Naive thymus-derived CD4-positive, alpha-beta T cell (primary cell): ENCODE measurements at regions of chr3 and their contacts with region 1.

Region 1: DNA sequence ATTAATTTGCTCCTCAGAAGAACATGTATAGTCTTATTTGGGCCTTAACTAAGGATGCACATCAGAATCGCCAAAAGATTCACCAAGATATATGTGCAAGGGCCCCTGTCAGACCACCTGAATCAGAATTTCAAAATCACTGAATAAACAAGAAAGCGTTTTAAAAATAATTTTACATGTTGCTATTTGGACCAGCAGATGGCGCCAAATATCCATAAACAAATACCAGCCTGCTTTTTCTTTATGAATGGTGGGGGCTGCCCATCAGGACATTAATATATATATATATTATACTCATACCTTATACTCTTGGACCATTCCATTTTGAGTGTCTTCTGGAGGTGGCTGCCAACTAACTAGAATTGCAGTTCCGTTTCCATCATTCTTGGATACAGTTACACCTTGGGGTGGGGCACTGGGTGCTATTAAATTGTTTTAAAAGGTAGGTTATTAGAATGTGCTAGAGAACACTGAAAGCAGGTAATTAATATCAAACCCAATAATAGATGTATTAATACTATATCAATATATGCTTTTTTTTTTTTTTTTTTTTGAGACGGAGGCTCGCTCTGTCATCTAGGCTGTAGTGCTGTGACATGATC is 1108.3 kb downstream of the ROBO1 start:
- DNase-seq: peak in 1 of 9 donors; percentile 2
- ATAC-seq: no peak
- H3K4me3 ChIP-seq: no peak overlapping the region
- H3K4me3 Mint-ChIP-seq: no peak overlapping the region
- H3K27ac ChIP-seq: no peak overlapping the region
- H3K27ac Mint-ChIP-seq: no peak overlapping the region
- H3K4me1 ChIP-seq: no peaks in the 10 kb centered on the region
- H3K4me1 Mint-ChIP-seq: no peaks in the 10 kb centered on the region
- H3K27me3 ChIP-seq: no peaks in the 10 kb centered on the region
- H3K27me3 Mint-ChIP-seq: no peaks in the 10 kb centered on the region

Region 2: DNA sequence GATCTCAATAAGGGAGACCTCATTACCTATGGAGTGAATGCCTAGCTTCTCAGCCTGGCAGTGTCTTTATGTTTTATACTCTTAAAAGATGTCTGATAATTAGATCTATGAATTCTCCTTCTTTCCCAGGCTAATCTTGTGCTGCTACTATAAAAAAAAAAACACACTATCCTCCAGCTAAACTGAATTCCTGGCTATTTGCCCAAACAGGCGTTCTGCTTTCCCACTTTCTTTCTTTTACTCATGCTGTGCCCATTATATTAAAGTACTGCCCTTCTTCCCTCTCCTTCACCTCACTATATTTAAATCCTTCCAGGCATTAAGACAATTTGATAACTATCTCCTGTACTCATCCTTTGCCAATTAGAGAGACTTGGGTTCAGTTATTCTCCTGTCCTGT is 484.7 kb before region 1 on chr3:
- CTCF ChIA-PET with region 1: no interaction called
- POLR2A ChIA-PET with region 1: no interaction called
- intact Hi-C with region 1: no loop called
- DNase-seq: no peak
- ATAC-seq: no peak
- H3K4me3 ChIP-seq: no peak overlapping the region
- H3K4me3 Mint-ChIP-seq: no peak overlapping the region
- H3K27ac ChIP-seq: no peak overlapping the region
- H3K27ac Mint-ChIP-seq: no peak overlapping the region
- H3K4me1 ChIP-seq: no peaks in the 10 kb centered on the region
- H3K4me1 Mint-ChIP-seq: no peaks in the 10 kb centered on the region
- H3K27me3 ChIP-seq: no peaks in the 10 kb centered on the region
- H3K27me3 Mint-ChIP-seq: no peaks in the 10 kb centered on the region

Region 3: GRCh38 chr3:78846718-78847117 is 187.2 kb after region 1 on chr3:
- CTCF ChIA-PET with region 1: no interaction called
- POLR2A ChIA-PET with region 1: no interaction called
- intact Hi-C with region 1: no loop called
- DNase-seq: no peak
- ATAC-seq: no peak
- H3K4me3 ChIP-seq: no peak overlapping the region
- H3K4me3 Mint-ChIP-seq: no peak overlapping the region
- H3K27ac ChIP-seq: no peak overlapping the region
- H3K27ac Mint-ChIP-seq: peak overlapping the region in 1 of 9 donors; percentile 53
- H3K4me1 ChIP-seq: no peaks in the 10 kb centered on the region
- H3K4me1 Mint-ChIP-seq: no peaks in the 10 kb centered on the region
- H3K27me3 ChIP-seq: no peaks in the 10 kb centered on the region
- H3K27me3 Mint-ChIP-seq: no peaks in the 10 kb centered on the region

Region 4: DNA sequence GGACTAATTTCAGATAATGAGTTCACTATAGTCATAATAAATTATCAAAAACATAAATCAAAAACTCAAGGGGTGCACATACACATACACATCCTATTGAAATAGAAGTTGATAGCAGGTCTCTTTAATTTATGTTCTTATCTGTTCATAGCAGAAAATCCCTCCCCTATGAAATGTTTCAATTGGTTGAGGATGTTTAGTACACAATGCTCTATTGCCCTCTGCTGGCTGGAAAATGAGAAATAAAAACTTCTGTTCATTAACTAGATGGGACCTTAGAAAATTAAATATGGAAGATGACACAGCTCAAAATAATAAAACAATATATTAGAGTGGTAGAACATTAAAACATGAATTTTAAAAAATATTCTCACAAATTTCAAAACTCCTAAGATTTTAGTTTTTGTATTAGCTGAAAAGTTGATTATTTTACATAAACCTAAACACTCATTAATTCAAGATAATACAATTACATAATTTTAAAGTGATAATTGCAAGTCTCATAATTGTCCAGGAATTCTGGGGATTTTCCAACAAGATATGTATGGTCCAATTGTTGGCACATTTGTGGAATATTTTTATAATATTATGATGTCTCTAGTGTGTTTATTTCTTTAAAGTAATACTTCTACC is 373.3 kb after region 1 on chr3:
- CTCF ChIA-PET with region 1: interaction called, 3 read pairs
- POLR2A ChIA-PET with region 1: no interaction called
- intact Hi-C with region 1: loop called in 1 of 2 experiments (anchors 1 kb)
- DNase-seq: no peak
- ATAC-seq: no peak
- H3K4me3 ChIP-seq: no peak overlapping the region
- H3K4me3 Mint-ChIP-seq: no peak overlapping the region
- H3K27ac ChIP-seq: no peak overlapping the region
- H3K27ac Mint-ChIP-seq: no peak overlapping the region
- H3K4me1 ChIP-seq: no peaks in the 10 kb centered on the region
- H3K4me1 Mint-ChIP-seq: no peaks in the 10 kb centered on the region
- H3K27me3 ChIP-seq: no peaks in the 10 kb centered on the region
- H3K27me3 Mint-ChIP-seq: no peaks in the 10 kb centered on the region

Region 5: GRCh38 chr3:79361748-79362378 is 702.4 kb after region 1 on chr3:
- CTCF ChIA-PET with region 1: no interaction called
- POLR2A ChIA-PET with region 1: no interaction called
- intact Hi-C with region 1: loop called in 1 of 2 experiments (anchors 1 kb)
- DNase-seq: no peak
- ATAC-seq: no peak
- H3K4me3 ChIP-seq: no peak overlapping the region
- H3K4me3 Mint-ChIP-seq: no peak overlapping the region
- H3K27ac ChIP-seq: no peak overlapping the region
- H3K27ac Mint-ChIP-seq: no peak overlapping the region
- H3K4me1 ChIP-seq: no peaks in the 10 kb centered on the region
- H3K4me1 Mint-ChIP-seq: no peaks in the 10 kb centered on the region
- H3K27me3 ChIP-seq: no peaks in the 10 kb centered on the region
- H3K27me3 Mint-ChIP-seq: no peaks in the 10 kb centered on the region

Region 6: DNA sequence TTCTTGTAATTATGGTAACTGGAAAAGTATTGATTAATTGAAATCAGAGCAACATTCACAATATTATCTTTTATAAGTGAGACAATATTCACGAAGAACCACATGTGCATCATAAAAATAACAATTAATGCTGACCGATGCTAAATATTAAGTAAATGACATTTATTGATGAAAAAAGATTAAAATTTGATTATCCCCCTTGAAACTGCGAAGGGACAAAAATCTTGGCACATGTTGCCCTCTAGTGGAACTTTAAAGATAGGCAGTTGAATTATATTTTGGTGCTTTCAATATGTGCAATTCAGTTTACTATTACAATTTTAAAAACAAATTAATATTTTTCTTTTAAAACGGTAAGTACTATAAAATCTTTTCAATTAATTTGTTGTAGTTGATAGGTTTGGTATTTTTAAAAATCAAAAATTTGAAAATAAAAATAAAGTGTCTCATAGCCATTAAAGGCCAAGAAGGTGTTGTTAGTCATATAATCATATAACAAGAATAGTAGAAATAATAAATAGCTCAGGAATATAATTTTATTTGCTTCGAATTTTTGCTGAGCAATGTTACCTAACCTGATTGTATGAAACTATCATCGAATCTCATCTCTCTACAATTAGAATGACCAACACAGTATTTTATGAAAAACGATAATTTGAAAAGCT is 838.1 kb after region 1 on chr3:
- CTCF ChIA-PET with region 1: no interaction called
- POLR2A ChIA-PET with region 1: no interaction called
- intact Hi-C with region 1: loop called in 1 of 2 experiments (anchors 2 kb)
- DNase-seq: no peak
- ATAC-seq: no peak
- H3K4me3 ChIP-seq: no peak overlapping the region
- H3K4me3 Mint-ChIP-seq: no peak overlapping the region
- H3K27ac ChIP-seq: no peak overlapping the region
- H3K27ac Mint-ChIP-seq: no peak overlapping the region
- H3K4me1 ChIP-seq: no peaks in the 10 kb centered on the region
- H3K4me1 Mint-ChIP-seq: no peaks in the 10 kb centered on the region
- H3K27me3 ChIP-seq: no peaks in the 10 kb centered on the region
- H3K27me3 Mint-ChIP-seq: no peaks in the 10 kb centered on the region